Colonic mucosa (tissue), 4 donors: ENCODE measurements at regions of chr4 and their contacts with region 1.

Region 1: DNA sequence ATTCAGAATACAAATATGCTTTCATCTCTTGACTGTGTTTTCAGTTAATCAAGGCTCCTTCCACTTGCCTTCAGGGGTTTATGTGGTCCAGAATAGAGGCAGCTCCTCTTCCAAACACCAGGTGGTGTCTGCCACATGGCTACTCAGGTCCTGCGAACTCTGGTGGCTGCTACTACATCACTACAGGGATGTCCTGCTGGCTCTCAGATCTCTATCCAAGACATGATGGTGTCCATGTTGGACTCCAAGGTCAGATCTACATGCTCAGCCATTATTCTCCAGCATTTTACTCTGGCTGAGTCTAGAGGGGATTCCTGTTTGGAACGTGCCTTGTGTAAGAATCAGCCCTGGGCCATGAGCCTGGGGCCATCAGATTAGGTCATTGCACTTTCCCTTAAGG is 103.2 kb downstream of the QRFPR start:
- DNase-seq: no peak
- H3K4me3 ChIP-seq: no peak overlapping the region
- H3K27ac ChIP-seq: no peak overlapping the region
- H3K4me1 ChIP-seq: no peaks in the 10 kb centered on the region
- H3K27me3 ChIP-seq: no peaks in the 10 kb centered on the region
- CTCF ChIP-seq: peak; percentile 33

Region 2: DNA sequence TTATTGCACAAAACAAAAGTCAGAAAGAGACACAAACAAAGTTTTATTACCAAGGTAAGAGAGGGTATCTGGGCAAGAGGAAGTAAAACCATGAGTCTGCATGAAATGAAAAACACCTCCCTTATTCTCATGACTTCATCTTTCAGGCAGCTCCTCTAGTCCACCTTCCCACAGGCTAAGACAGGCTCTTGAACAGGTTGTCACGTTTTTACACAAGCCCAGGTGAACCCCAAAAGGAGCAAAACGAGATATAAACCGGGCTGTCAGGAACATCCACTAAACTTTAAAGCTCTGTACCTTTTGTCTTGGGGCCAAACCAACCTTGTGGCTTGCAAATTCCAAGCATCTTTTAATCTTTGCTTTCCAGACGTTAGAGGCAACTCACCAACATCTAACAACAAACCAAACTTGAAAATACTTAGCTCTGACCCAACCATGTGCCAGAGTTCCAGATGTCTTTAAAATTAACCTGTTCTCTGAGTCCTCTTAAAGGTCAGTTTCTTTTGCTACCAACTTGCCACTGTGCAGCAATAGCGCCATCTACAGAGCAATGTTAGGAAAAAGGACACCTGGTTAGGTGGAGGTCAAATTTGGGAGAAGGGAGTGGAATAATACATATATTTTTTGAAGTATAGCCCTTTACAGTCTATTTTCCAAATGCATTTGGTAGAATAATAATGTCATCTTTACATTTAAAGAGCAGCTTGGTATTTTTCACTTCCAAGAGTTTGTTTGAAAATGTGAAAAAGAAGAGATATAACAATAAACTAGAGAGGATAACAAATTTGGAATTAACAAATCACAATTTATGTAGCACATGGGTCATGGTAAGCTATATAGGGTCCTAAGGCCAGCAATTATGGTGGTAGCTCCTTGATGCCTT is 30.1 kb after region 1 on chr4:
- intact Hi-C with region 1: loop called (anchors 2 kb)
- DNase-seq: peak; percentile 55
- H3K4me3 ChIP-seq: no peak overlapping the region
- H3K27ac ChIP-seq: no peak overlapping the region
- H3K4me1 ChIP-seq: no peaks in the 10 kb centered on the region
- H3K27me3 ChIP-seq: no peaks in the 10 kb centered on the region
- CTCF ChIP-seq: peak; percentile 64